GM18951 (cell line): ENCODE measurements at regions of chr18 and their contacts with region 1.

Region 1: GRCh38 chr18:58768293-58768974 is 96.2 kb upstream of the ZNF532 start:
- POLR2A ChIP-seq: no peak

Region 2: GRCh38 chr18:58180738-58181353 is 587.6 kb before region 1 on chr18:
- in situ Hi-C with region 1: loop called (anchors 25 kb)
- POLR2A ChIP-seq: no peak

Region 3: GRCh38 chr18:58392324-58393000 is 376.0 kb before region 1 on chr18:
- in situ Hi-C with region 1: loop called (anchors 25 kb)
- POLR2A ChIP-seq: no peak